Activated CD8-positive, alpha-beta memory T cell treated with anti-CD3 and anti-CD28 coated beads, Interleukin-2, amount 10 ng/mL, durations not matched to agents 7 days and 5 days (primary cell): ENCODE measurements at regions of chr1 and their contacts with region 1.

Region 1: DNA sequence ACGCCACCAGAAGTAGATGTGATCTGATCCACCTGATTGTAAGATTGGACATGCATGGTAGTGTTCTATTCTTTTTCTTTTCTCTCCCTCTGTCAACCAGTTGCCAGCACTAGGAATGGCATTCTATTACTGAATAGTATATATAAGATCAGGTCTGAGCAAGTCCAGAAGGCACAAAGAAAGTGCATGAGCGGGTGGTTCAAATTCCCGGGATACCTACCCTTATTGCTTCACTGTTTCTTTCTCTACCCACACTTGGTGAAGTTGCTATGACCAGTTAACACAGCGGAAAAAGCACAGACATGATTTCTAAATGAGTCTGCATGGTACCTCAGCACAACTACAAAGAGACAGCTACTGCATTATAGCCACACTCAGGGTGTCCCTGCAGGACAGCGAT is 64.0 kb downstream of the SLC9A1 start:
- DNase-seq: no peak
- ATAC-seq: no peak
- H3K4me3 Mint-ChIP-seq: no peak overlapping the region
- H3K27ac Mint-ChIP-seq: no peak overlapping the region
- H3K4me1 Mint-ChIP-seq: no peaks in the 10 kb centered on the region
- H3K27me3 Mint-ChIP-seq: peaks cover 10% of the 10 kb centered on the region

Region 2: DNA sequence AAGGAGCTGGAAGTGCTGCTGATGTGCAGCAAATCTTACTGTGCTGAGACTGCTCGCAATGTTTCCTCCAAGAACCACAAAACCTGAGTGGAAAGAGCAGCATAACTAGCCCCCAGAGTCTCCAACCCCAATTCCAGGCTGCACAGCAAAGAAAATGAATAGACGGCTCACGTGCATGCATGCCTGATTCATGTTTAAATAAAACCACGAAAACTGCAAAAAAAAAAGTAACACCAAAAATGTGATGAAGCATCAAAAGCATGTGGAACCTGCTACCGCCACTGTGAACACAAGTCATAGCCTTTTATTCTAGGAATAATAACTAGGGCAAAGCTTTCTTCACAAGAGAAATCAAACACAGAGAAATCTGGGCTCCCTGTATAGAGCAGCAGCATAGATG is 107.0 kb before region 1 on chr1:
- CTCF ChIA-PET with region 1: no interaction called
- DNase-seq: no peak
- ATAC-seq: no peak
- H3K4me3 Mint-ChIP-seq: no peak overlapping the region
- H3K27ac Mint-ChIP-seq: no peak overlapping the region
- H3K4me1 Mint-ChIP-seq: no peaks in the 10 kb centered on the region
- H3K27me3 Mint-ChIP-seq: peaks cover 42% of the 10 kb centered on the region

Region 3: DNA sequence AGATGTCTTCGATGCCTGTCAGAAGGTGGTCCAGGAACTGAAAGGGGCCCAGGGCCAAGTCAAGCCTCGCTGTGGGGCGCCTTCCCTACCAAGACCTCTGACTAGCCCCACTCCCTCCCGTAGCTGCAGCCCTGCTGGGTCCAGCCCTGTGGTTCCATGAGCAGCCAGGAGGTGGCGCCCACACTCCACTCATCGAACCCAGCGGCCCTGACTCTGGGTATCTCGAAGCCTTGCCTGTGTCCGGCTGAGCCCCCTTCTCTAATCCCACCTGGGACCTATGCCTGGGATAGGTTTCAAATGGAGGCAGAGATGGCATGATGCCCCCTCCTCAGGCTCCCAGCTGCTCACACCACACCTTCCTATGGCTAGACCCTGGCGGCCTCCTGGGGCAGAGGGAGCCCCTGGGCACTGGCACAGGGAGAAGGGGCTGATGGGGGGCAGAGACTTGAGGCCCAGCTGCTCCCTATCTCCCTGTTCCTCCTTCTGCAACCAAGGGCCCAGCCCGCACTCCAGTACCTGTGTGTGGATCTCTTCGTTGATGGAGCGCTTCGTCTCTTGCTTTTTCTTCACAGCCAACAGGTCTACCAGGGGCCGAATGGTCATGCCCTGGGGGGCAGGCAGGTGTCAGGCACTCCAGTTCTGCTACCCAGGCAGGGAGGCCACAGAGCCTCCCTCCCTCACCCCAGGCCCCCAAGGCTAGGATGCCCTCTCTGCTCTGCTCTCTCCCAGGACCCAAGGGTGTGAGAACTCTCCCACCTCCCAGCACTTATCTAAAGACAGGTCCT is 12.0 kb after region 1 on chr1:
- CTCF ChIA-PET with region 1: interaction called, 11 read pairs
- DNase-seq: peak; percentile 84
- ATAC-seq: peak; percentile 71
- H3K4me3 Mint-ChIP-seq: no peak overlapping the region
- H3K27ac Mint-ChIP-seq: no peak overlapping the region
- H3K4me1 Mint-ChIP-seq: peaks cover 18% of the 10 kb centered on the region
- H3K27me3 Mint-ChIP-seq: no peaks in the 10 kb centered on the region